Right ventricle myocardium superior (tissue), 1 donor: ENCODE measurements at regions of chr10 and their contacts with region 1.

Region 1: DNA sequence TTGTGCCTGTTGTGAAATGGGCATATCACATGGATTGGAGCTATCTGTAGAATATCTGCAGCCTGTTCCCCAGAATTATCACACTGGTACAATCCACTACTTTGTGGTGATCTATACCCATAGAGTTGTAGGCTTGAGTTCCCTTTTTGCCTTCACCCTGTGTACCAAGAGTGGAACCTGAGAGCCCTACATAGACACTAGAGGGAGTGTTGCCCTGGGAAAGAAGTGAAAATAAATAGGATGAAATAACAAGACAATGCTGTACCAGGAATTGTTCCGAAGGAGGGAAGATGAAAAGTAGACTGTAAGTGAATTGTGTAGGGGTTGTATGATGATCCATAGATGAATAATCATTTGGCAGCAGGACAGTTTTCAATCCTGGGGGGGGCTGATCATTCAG is 9.0 kb downstream of the SORCS3 start:
- DNase-seq: no peak
- ATAC-seq: peak; percentile 75

Region 2: DNA sequence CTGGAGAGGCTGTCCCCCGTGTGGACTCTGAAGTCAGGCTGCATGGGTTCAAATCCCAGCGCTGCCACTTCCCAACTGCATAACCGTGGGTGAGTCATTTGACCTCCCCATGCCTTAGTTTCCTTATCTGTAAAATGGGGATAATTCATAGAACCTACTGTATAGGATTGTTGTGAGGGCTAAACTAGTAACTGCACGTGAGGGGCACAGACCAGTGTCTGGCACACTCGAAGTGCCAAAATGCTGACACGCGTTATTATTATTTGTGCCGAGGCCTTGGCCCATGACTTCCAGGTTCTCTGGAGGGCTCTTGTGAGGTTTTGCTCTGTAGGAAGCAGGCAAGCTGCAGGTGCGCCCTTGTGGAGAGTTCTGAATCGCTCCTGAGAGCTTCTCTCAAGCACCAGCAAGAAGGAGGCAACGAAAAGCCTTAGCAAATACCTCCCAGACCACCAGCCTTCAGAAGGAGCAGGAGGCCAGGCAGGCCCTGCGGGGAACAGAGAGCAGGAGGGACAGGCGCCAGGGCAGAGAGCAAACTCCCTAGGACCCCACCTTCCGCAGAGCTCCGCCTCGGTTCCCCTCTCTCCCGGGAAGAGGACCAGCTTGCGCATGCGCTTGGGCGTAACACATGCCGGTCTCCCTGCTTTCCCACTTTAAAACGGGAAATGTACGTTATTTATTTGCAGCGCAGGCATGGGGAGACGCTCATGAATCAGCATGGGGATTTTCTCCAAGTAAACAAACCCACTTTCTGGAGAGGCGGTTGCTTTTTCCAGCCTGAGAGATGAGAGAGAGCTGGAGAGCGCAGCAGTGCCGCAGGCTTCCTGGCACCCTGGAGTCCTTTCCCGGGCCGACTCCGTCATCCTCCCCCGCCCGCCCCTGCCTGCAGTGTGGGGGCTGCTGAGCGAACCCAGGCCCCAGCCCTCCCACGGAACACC is 30.7 kb after region 1 on chr10:
- intact Hi-C with region 1: no loop called
- DNase-seq: peak; percentile 45
- ATAC-seq: peak; percentile 75

Region 3: GRCh38 chr10:104777086-104777799 is 127.2 kb after region 1 on chr10:
- intact Hi-C with region 1: loop called (anchors 5 kb)
- DNase-seq: no peak
- ATAC-seq: no peak